Esophagus muscularis mucosa (tissue), 4 donors: ENCODE measurements at regions of chr1 and their contacts with region 1.

Region 1: GRCh38 chr1:153922972-153923925 is at the start of gene GATAD2B:
- DNase-seq: peak; percentile 100
- H3K4me3 ChIP-seq: peak within 1 kb of the TSS; percentile 93 to 99 (median 97)
- H3K27ac ChIP-seq: peak within 1 kb of the TSS; percentile 95 to 99 (median 98)
- H3K4me1 ChIP-seq: peaks cover 35 to 49% (median 44%) of the 10 kb centered on the region in 4 donors
- H3K27me3 ChIP-seq: no peaks in the 10 kb centered on the region
- CTCF ChIP-seq: no peak
- EP300 ChIP-seq: no peak
- POLR2A ChIP-seq: no peak
- total RNA-seq, gene GATAD2B: 21.9 to 30.5 (median 26.4) TPM

Region 2: GRCh38 chr1:153796791-153797659 is 126.2 kb before region 1 on chr1:
- intact Hi-C with region 1: loop called (anchors 5 kb)
- DNase-seq: no peak
- H3K4me3 ChIP-seq: no peak overlapping the region
- H3K27ac ChIP-seq: no peak overlapping the region
- H3K4me1 ChIP-seq: peaks cover 0 to 8% (median 1%) of the 10 kb centered on the region in 4 donors
- H3K27me3 ChIP-seq: no peaks in the 10 kb centered on the region
- CTCF ChIP-seq: peak; percentile 89 to 93 (median 91)
- EP300 ChIP-seq: no peak
- POLR2A ChIP-seq: no peak

Region 3: DNA sequence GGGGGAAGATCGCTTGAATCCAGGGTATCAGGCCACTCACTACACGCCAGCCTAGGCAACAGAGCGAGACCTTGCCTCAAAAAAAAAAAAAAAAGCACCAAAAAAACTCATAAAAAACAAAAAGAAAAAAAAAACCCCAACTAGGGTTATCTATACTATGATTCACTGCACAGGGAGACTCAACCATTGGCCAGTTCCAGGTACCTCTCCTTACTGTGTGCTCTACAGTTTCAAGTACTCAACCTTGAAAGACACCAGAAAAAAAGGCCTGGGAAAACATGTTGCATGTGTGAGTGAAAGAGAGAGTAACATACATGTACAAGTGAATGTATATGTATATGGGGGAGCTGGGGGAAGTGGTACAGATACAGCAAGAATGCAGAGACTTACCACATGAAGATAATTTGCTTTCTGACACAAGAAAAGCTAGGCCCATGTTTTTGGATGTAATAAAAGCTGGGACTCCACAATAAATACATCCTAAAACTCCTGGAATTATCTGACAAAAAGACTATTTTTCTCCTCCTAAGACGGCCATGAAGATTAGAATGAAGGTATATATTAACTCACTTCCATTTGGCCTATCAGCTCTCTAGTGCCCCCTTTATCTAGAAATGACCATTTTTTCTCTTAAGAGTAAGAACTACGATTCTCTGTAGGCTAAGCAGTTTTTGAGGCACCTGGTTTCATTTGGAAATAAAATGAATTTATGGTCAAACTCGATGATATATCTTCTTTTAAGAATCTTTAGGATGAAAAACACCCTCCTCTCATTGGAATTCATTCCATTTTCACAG is 95.9 kb before region 1 on chr1:
- intact Hi-C with region 1: loop called (anchors 2 kb)
- DNase-seq: no peak
- H3K4me3 ChIP-seq: no peak overlapping the region
- H3K27ac ChIP-seq: no peak overlapping the region
- H3K4me1 ChIP-seq: peaks cover 5 to 19% (median 18%) of the 10 kb centered on the region in 4 donors
- H3K27me3 ChIP-seq: no peaks in the 10 kb centered on the region
- CTCF ChIP-seq: no peak
- EP300 ChIP-seq: no peak
- POLR2A ChIP-seq: no peak

Region 4: GRCh38 chr1:153872934-153873333 is 50.3 kb before region 1 on chr1:
- intact Hi-C with region 1: loop called (anchors 5 kb)
- DNase-seq: no peak
- H3K4me3 ChIP-seq: no peak overlapping the region
- H3K27ac ChIP-seq: no peak overlapping the region
- H3K4me1 ChIP-seq: peaks cover 0 to 28% (median 20%) of the 10 kb centered on the region in 4 donors
- H3K27me3 ChIP-seq: no peaks in the 10 kb centered on the region
- CTCF ChIP-seq: no peak
- EP300 ChIP-seq: no peak
- POLR2A ChIP-seq: no peak

Region 5: DNA sequence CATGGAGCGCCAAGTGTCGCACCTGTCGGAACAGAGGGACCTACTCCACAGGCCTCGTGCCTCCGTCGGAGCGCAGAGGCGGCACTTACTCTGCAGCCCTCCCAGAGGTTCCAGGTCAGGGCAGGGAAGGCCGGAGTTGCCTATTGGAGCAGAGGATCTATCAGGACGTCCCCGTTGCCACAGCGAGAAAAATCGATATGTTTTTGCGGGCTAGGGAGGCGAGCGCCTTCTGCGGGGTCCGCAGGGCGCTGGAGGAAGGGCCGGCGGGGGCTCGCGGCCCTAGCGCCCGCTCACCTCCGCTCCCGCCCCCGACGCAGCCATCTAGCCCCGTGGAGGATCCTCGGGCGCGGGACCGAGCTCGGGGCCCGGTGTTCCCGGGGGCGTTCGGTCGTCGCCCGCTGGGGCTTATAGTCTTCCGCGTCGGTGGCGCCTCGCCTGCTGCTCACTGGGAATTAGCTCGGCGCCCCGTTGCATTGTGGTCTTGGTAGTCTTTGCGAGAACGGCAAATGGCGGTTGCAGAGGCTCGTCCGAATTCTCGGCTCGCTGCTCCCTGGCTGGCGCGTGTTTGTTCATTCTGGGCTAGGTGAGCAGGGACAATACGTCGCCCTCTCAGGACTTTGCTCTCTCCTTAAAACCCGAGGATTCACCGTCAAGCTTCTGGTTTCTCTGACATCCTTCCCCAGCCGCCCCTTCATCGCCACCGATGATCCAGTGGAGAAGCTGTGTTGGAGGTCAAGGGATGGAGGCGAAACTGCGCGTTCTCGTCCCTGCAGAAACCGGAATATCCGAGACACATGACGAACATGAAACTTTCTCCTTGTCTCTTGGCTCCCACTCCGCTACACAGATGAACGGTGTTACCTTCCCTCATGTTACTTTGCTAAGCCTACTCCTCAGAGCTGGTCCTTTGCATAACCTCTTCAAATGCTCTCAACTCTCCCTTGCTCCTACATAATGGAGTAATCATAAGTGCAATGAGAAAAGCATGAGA is 54.3 kb after region 1 on chr1 and contains the start of gene JTB:
- intact Hi-C with region 1: loop called (anchors 5 kb)
- DNase-seq: peak; percentile 98
- H3K4me3 ChIP-seq: peak within 1 kb of the TSS; percentile 72 to 100 (median 94)
- H3K27ac ChIP-seq: peak within 1 kb of the TSS; percentile 93 to 95 (median 94)
- H3K4me1 ChIP-seq: peaks cover 19 to 34% (median 25%) of the 10 kb centered on the region in 4 donors
- H3K27me3 ChIP-seq: no peaks in the 10 kb centered on the region
- CTCF ChIP-seq: peak in 1 of 3 experiments; percentile 14
- EP300 ChIP-seq: no peak
- POLR2A ChIP-seq: peak; percentile 84
- total RNA-seq, gene JTB: 175 to 238 (median 216) TPM

Region 6: GRCh38 chr1:153990468-153991150 is 67.4 kb after region 1 on chr1 and contains the start of gene RPS27:
- intact Hi-C with region 1: no loop called
- DNase-seq: peak; percentile 98
- H3K4me3 ChIP-seq: peak within 1 kb of the TSS; percentile 85 to 94 (median 87)
- H3K27ac ChIP-seq: peak within 1 kb of the TSS; percentile 91 to 97 (median 95)
- H3K4me1 ChIP-seq: peaks cover 35 to 58% (median 56%) of the 10 kb centered on the region in 4 donors
- H3K27me3 ChIP-seq: no peaks in the 10 kb centered on the region
- CTCF ChIP-seq: no peak
- EP300 ChIP-seq: no peak
- POLR2A ChIP-seq: peak; percentile 99
- total RNA-seq, gene RPS27: 1,242 to 3,317 (median 2,693) TPM